ENCODE measurements at regions of chr4 and their contacts with region 1.

Region 1: GRCh38 chr4:77618383-77619122 is 12.9 kb downstream of the CXCL13 start:
- DNase-seq: peak; percentile 76
- H3K4me3 ChIP-seq: no peak overlapping the region
- H3K27ac ChIP-seq: no peak overlapping the region
- H3K4me1 ChIP-seq: peaks cover 0 to 4% (median 0%) of the 10 kb centered on the region in 4 donors
- H3K27me3 ChIP-seq: no peaks in the 10 kb centered on the region
- CTCF ChIP-seq: peak; percentile 74 to 81 (median 79)
- EP300 ChIP-seq: no peak
- POLR2A ChIP-seq: no peak

Region 2: DNA sequence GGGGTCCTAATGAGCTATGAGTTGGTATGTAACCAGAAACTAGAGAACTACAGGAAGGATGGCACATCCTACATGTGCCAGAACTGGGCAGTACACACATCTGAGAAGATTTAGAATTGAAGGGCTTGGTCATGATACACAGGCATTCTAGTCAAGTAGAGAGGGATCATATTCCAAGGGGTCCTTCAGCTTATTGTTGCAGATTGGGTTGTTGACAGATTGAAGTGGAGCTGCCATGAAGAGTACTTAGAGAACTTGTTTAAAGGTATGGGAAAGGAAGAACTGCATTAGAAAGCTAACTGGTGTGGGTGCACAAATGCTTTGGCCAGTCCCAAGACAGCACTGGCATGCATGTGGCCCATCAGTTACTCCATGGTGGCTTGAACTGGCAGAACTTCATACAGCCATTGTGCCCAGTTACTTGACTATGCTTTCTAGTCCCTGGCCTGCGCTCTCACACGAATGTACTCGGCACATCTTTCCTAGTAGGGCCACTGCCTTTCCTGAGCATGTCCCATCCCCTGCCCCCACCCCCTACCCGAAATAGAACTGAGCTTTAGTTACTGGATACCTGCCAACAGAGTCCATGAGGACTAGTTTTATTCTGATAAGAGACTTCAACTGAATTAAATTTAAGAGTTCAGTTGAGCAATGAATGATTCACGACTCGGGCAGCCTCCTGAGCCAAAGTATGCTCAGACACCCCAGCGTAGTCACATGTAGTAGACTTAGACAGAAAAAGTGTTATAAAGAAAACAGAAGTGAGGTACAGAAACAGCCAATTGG is 397.5 kb before region 1 on chr4:
- in situ Hi-C with region 1: no loop called
- intact Hi-C with region 1: no loop called
- DNase-seq: no peak
- H3K4me3 ChIP-seq: no peak overlapping the region
- H3K27ac ChIP-seq: no peak overlapping the region
- H3K4me1 ChIP-seq: no peaks in the 10 kb centered on the region
- H3K27me3 ChIP-seq: no peaks in the 10 kb centered on the region
- CTCF ChIP-seq: no peak
- EP300 ChIP-seq: no peak
- POLR2A ChIP-seq: no peak

Region 3: GRCh38 chr4:77385124-77385969 is 233.2 kb before region 1 on chr4:
- in situ Hi-C with region 1: no loop called
- intact Hi-C with region 1: loop called (anchors 5 kb)
- DNase-seq: peak; percentile 71
- H3K4me3 ChIP-seq: no peak overlapping the region
- H3K27ac ChIP-seq: no peak overlapping the region
- H3K4me1 ChIP-seq: no peaks in the 10 kb centered on the region
- H3K27me3 ChIP-seq: no peaks in the 10 kb centered on the region
- CTCF ChIP-seq: peak; percentile 66 to 83 (median 76)
- EP300 ChIP-seq: no peak
- POLR2A ChIP-seq: no peak